CD14-positive monocyte (primary cell): ENCODE measurements at regions of chr18 and their contacts with region 1.

Region 1: GRCh38 chr18:13260197-13260934 is 41.8 kb downstream of the LDLRAD4 start:
- DNase-seq: peak; percentile 21 to 61 (median 59)
- H3K4me3 ChIP-seq: peak overlapping the region in 1 of 3 experiments; percentile 10
- H3K4me3 Mint-ChIP-seq: peak overlapping the region in 1 of 2 donors; percentile 66
- H3K27ac ChIP-seq: peak overlapping the region in 1 of 2 donors; percentile 36
- H3K27ac Mint-ChIP-seq: peak overlapping the region; percentile 56 to 77 (median 63)
- H3K4me1 ChIP-seq: peaks cover 34 to 36% of the 10 kb centered on the region in 2 donors
- H3K4me1 Mint-ChIP-seq: peaks cover 41% of the 10 kb centered on the region
- H3K27me3 ChIP-seq: no peaks in the 10 kb centered on the region
- H3K27me3 Mint-ChIP-seq: peaks cover 0 to 5% (median 3%) of the 10 kb centered on the region in 3 donors
- CTCF ChIP-seq: no peak

Region 2: GRCh38 chr18:13166023-13166422 is 94.3 kb before region 1 on chr18:
- intact Hi-C with region 1: no loop called
- DNase-seq: no peak
- H3K4me3 ChIP-seq: no peak overlapping the region
- H3K4me3 Mint-ChIP-seq: no peak overlapping the region
- H3K27ac ChIP-seq: no peak overlapping the region
- H3K27ac Mint-ChIP-seq: no peak overlapping the region
- H3K4me1 ChIP-seq: no peaks in the 10 kb centered on the region
- H3K4me1 Mint-ChIP-seq: no peaks in the 10 kb centered on the region
- H3K27me3 ChIP-seq: no peaks in the 10 kb centered on the region
- H3K27me3 Mint-ChIP-seq: peaks cover 0 to 2% (median 0%) of the 10 kb centered on the region in 3 donors
- CTCF ChIP-seq: no peak

Region 3: DNA sequence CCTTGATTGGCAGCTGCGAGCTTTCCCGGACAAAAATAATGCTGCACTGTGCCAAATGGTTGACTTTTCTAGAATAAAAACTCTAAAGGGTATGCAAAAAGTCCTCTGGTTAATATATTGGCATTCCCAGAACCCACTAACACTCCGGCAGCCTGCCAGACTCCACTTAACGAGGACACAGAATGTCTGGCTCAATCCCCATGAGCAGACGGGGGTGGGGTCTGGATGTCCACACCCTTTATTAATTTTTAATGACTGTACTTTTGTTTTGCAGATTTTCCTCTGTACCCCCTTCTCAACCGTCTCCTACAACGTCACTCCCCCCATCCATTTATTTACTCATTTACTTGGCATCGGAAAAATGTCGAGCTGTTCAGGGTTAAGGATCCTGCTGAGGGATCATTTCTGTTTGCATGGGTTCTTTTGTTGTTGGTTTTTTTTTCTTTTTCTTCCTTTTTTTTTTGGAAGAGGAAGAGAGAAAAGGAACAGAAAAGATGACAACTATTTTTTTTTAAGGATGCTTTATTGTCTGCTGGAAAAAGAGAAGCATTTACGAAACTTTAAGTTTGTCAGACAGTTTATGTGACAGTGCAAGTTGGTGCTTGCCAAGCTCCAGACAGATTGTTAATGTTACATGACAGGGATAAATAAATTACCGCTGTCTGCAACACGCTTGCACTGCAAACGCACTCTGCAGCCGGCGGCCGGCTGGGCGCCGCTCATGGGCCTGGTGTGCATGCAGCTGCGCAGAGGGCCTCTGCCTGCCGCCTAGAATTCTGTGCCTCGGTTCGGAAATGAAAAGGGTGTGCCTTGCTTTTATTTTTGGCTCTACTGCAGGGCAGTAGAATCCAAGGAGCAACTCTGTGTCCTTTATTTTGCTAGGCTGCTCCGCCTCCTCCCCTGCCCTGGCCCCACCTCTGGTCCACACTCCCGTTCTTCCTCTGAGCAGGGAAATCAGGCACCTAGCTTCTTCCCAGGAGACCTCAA is 38.2 kb before region 1 on chr18:
- intact Hi-C with region 1: loop called in 1 of 2 experiments (anchors 5 kb)
- DNase-seq: peak; percentile 51 to 79 (median 57)
- H3K4me3 ChIP-seq: peak overlapping the region; percentile 4 to 70 (median 12)
- H3K4me3 Mint-ChIP-seq: peak overlapping the region; percentile 78 to 90
- H3K27ac ChIP-seq: peak overlapping the region; percentile 51 to 77
- H3K27ac Mint-ChIP-seq: peak overlapping the region; percentile 75 to 91 (median 90)
- H3K4me1 ChIP-seq: peaks cover 50 to 61% of the 10 kb centered on the region in 2 donors
- H3K4me1 Mint-ChIP-seq: peaks cover 58% of the 10 kb centered on the region
- H3K27me3 ChIP-seq: peaks cover 0 to 2% of the 10 kb centered on the region in 2 donors
- H3K27me3 Mint-ChIP-seq: peaks cover 11 to 17% (median 14%) of the 10 kb centered on the region in 3 donors
- CTCF ChIP-seq: no peak